Common myeloid progenitor, CD34-positive (primary cell): ENCODE measurements at regions of chr17 and their contacts with region 1.

Region 1: DNA sequence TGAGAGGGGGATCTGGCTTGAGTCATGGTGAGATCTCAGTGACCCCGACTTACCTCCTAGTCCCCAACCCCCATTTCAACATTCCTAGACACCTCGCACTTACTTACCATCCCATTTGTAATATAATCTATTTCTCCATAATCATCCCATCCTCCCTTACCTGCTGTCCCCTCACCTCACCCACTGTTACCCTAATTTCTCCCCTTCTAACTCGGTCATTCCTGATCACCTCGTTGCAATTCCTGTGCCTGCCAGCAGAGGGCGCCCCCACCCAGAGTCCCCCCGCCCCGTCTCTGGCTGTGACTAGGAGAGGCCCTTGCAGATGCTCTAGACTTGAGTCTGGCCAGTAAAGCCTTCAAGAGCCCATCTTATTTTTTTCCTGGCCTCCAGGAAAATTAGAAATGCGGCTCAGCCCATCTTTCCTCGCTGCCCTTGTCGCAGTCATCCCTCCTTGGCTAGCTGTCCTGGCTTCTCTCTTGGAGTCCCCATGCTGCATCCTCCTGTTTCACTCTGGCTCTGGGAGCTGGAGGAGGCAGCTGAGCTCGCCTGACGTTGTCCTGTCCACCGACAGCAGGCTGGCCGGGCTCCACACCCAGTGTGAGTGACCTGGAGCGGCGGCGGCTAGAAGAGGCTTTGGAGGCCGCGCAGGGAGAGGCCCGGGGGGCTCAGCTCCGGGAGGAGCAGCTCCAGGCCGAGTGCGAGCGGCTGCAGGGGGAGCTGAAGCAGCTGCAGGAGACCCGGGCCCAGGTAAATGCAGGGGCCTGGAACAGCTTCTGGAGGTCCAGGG is 5.0 kb downstream of the TBKBP1 start:
- DNase-seq: peak in 2 of 3 donors; percentile 62 to 70
- H3K4me3 ChIP-seq: no peak overlapping the region
- H3K27ac ChIP-seq: no peak overlapping the region
- H3K4me1 ChIP-seq: peaks cover 5 to 54% (median 45%) of the 10 kb centered on the region in 4 experiments
- H3K27me3 ChIP-seq: no peaks in the 10 kb centered on the region

Region 2: GRCh38 chr17:47687748-47688147 is 11.2 kb before region 1 on chr17:
- CTCF ChIA-PET with region 1: interaction called, 17 read pairs
- POLR2A ChIA-PET with region 1: interaction called, 3 read pairs
- DNase-seq: no peak
- H3K4me3 ChIP-seq: no peak overlapping the region
- H3K27ac ChIP-seq: no peak overlapping the region
- H3K4me1 ChIP-seq: peaks cover 2 to 16% (median 7%) of the 10 kb centered on the region in 4 experiments
- H3K27me3 ChIP-seq: no peaks in the 10 kb centered on the region

Region 3: DNA sequence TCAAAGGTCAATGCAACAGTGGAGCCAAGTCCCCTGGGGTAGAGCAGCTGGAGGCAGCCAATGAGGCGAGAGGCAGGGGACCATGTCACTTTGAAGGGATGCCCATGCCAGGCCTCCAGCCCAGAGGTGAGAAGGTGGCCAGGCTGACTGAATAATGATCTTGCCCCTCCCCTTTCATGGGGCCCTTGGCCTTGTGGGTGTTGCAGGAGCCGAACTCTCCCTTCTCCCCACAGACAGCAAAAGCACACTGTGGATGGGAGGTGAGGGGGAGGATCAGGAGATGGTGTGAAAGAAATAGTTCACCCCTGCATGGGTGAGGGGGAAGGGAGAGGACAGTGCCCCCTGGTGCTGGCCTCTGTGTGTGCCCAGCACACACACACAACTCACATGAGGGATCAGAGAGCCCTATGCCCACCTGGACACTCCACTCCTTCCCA is 18.3 kb after region 1 on chr17:
- CTCF ChIA-PET with region 1: interaction called, 118 read pairs
- POLR2A ChIA-PET with region 1: interaction called, 4 read pairs
- DNase-seq: peak in 1 of 3 donors; percentile 41
- H3K4me3 ChIP-seq: no peak overlapping the region
- H3K27ac ChIP-seq: no peak overlapping the region
- H3K4me1 ChIP-seq: peaks cover 10 to 71% (median 62%) of the 10 kb centered on the region in 4 experiments
- H3K27me3 ChIP-seq: peaks cover 0 to 13% (median 0%) of the 10 kb centered on the region in 5 experiments

Region 4: GRCh38 chr17:47733047-47733673 is 34.2 kb after region 1 on chr17 and contains the start of gene TBX21:
- CTCF ChIA-PET with region 1: interaction called, 102 read pairs
- POLR2A ChIA-PET with region 1: interaction called, 4 read pairs
- DNase-seq: peak; percentile 92 to 94 (median 94)
- H3K4me3 ChIP-seq: peak within 1 kb of the TSS; percentile 17 to 70 (median 51)
- H3K27ac ChIP-seq: no peak within 1 kb of the TSS
- H3K4me1 ChIP-seq: peaks cover 0 to 27% (median 25%) of the 10 kb centered on the region in 4 experiments
- H3K27me3 ChIP-seq: peaks cover 0 to 24% (median 12%) of the 10 kb centered on the region in 5 experiments

Region 5: GRCh38 chr17:47742319-47743181 is 43.6 kb after region 1 on chr17:
- CTCF ChIA-PET with region 1: interaction called, 102 read pairs
- POLR2A ChIA-PET with region 1: no interaction called
- DNase-seq: peak; percentile 58 to 68 (median 59)
- H3K4me3 ChIP-seq: no peak overlapping the region
- H3K27ac ChIP-seq: no peak overlapping the region
- H3K4me1 ChIP-seq: peaks cover 6 to 22% (median 16%) of the 10 kb centered on the region in 4 experiments
- H3K27me3 ChIP-seq: peaks cover 0 to 4% (median 0%) of the 10 kb centered on the region in 5 experiments

Region 6: GRCh38 chr17:47776330-47777197 is 77.6 kb after region 1 on chr17:
- CTCF ChIA-PET with region 1: no interaction called
- POLR2A ChIA-PET with region 1: no interaction called
- DNase-seq: peak; percentile 36 to 76 (median 69)
- H3K4me3 ChIP-seq: no peak overlapping the region
- H3K27ac ChIP-seq: no peak overlapping the region
- H3K4me1 ChIP-seq: no peaks in the 10 kb centered on the region
- H3K27me3 ChIP-seq: peaks cover 5 to 64% (median 17%) of the 10 kb centered on the region in 5 experiments